Endothelial cell of umbilical vein (primary cell): ENCODE measurements at regions of chr6 and their contacts with region 1.

Region 1: GRCh38 chr6:50699051-50699775 is 14.1 kb upstream of the TFAP2D start:
- DNase-seq: no peak
- H3K4me3 ChIP-seq: no peak overlapping the region
- H3K27ac ChIP-seq: no peak overlapping the region
- H3K4me1 ChIP-seq: no peaks in the 10 kb centered on the region
- H3K27me3 ChIP-seq: no peaks in the 10 kb centered on the region
- CTCF ChIP-seq: no peak
- POLR2A ChIP-seq: no peak

Region 2: DNA sequence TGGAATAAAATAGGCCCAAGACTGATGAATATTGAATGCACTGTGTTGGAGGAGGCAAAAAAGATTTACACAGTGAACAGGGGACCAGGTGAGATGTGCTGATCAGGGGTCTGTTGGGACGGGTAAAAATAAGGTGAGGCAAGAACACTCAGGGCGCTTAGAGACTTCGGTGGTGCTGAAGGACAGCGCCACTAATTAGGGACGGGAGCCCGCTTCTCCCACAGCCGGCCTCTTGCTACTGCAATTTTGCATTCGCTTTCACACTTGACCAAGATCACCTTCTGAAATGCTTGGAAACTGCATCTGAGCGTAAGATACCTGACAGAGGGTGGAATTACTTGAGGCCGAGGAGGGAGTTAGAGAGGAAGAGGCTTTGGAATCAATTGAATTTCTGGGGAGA is 21.4 kb after region 1 on chr6:
- CTCF ChIA-PET with region 1: no interaction called
- POLR2A ChIA-PET with region 1: no interaction called
- dilution Hi-C with region 1: no loop called
- intact Hi-C with region 1: loop called (anchors 2 kb)
- DNase-seq: peak; percentile 5
- H3K4me3 ChIP-seq: no peak overlapping the region
- H3K27ac ChIP-seq: no peak overlapping the region
- H3K4me1 ChIP-seq: no peaks in the 10 kb centered on the region
- H3K27me3 ChIP-seq: peaks cover 58 to 76% of the 10 kb centered on the region in 2 experiments
- CTCF ChIP-seq: no peak
- POLR2A ChIP-seq: no peak

Region 3: DNA sequence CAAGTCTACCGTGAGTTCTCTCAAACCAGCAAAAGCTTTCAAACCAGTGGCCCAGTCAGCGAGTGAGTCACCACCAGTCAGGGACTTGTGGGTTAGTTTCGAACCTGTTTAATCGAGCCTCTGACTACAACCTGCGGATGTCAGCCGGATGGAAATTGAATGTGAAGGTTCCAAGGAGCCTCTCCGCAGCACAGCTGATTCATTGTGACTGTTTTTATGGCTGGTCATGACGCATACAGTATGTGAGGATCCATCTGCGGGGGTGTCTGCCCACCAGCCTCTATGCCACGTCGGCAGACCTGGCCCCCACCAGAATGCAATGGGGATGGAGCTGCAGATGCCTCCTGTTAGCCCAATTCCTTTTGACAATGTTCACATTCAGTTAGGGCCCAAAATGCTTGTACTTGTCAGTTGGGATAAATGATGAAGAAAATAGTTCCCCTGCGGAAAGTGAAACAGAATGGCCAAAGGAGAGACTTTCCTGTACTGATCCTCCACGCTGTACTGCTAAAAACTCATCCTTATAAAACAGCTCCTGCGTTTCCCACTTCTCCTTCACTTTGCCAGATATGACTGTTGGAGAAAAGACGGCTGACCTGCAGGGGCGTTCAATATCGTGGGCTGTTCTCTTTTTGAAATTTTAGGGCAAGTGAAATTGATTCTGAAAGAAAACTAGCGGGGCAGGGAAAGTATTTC is 326.0 kb after region 1 on chr6:
- CTCF ChIA-PET with region 1: no interaction called
- POLR2A ChIA-PET with region 1: no interaction called
- dilution Hi-C with region 1: no loop called
- intact Hi-C with region 1: no loop called
- DNase-seq: no peak
- H3K4me3 ChIP-seq: no peak overlapping the region
- H3K27ac ChIP-seq: no peak overlapping the region
- H3K4me1 ChIP-seq: peaks cover 2% of the 10 kb centered on the region
- H3K27me3 ChIP-seq: no peaks in the 10 kb centered on the region
- CTCF ChIP-seq: no peak
- POLR2A ChIP-seq: no peak